Heart right ventricle (tissue), 16 donors: ENCODE measurements at regions of chr9 and their contacts with region 1.

Region 1: GRCh38 chr9:83219152-83219923 is 156.4 kb upstream of the RASEF start:
- DNase-seq: peak; percentile 81 to 87
- ATAC-seq: peak; percentile 95 to 98 (median 97)
- H3K4me3 ChIP-seq: peak overlapping the region; percentile 31 to 77 (median 63)
- H3K27ac ChIP-seq: peak overlapping the region; percentile 20 to 84 (median 74)
- H3K4me1 ChIP-seq: peaks cover 0 to 29% (median 23%) of the 10 kb centered on the region in 9 donors
- H3K27me3 ChIP-seq: no peaks in the 10 kb centered on the region
- CTCF ChIP-seq: peak; percentile 47 to 84 (median 71)

Region 2: GRCh38 chr9:83266666-83267496 is 47.5 kb after region 1 on chr9:
- intact Hi-C with region 1: no loop called
- DNase-seq: peak; percentile 43 to 67
- ATAC-seq: peak; percentile 82 to 97 (median 92)
- H3K4me3 ChIP-seq: peak overlapping the region; percentile 9 to 49 (median 36)
- H3K27ac ChIP-seq: peak overlapping the region; percentile 14 to 89 (median 82)
- H3K4me1 ChIP-seq: peaks cover 0 to 72% (median 31%) of the 10 kb centered on the region in 9 donors
- H3K27me3 ChIP-seq: no peaks in the 10 kb centered on the region
- CTCF ChIP-seq: no peak

Region 3: GRCh38 chr9:83327323-83327722 is 108.0 kb after region 1 on chr9:
- intact Hi-C with region 1: loop called in 6 of 10 experiments (anchors 5 to 10 kb)
- DNase-seq: peak in 1 of 2 donors; percentile 20
- ATAC-seq: peak in 7 of 8 donors; percentile 17 to 72 (median 56)
- H3K4me3 ChIP-seq: no peak overlapping the region
- H3K27ac ChIP-seq: no peak overlapping the region
- H3K4me1 ChIP-seq: peaks cover 0 to 15% (median 0%) of the 10 kb centered on the region in 9 donors
- H3K27me3 ChIP-seq: no peaks in the 10 kb centered on the region
- CTCF ChIP-seq: no peak

Region 4: GRCh38 chr9:83538172-83538889 is 319.0 kb after region 1 on chr9 and contains the start of gene FRMD3:
- intact Hi-C with region 1: loop called in 9 of 10 experiments (anchors 2 to 10 kb)
- DNase-seq: peak; percentile 88 to 91
- ATAC-seq: peak; percentile 91 to 99 (median 96)
- H3K4me3 ChIP-seq: peak within 1 kb of the TSS; percentile 62 to 87 (median 72)
- H3K27ac ChIP-seq: peak within 1 kb of the TSS; percentile 78 to 89 (median 84)
- H3K4me1 ChIP-seq: peaks cover 3 to 24% (median 21%) of the 10 kb centered on the region in 9 donors
- H3K27me3 ChIP-seq: peaks cover 0 to 17% (median 0%) of the 10 kb centered on the region in 7 donors
- CTCF ChIP-seq: peak; percentile 70 to 97 (median 84)
- total RNA-seq, gene FRMD3: 60.5 to 145 (median 113) TPM

Region 5: GRCh38 chr9:83583151-83584014 is 364.0 kb after region 1 on chr9:
- intact Hi-C with region 1: loop called in 1 of 10 experiments (anchors 10 kb)
- DNase-seq: peak in 1 of 2 donors; percentile 67
- ATAC-seq: peak in 5 of 8 donors; percentile 61 to 81 (median 75)
- H3K4me3 ChIP-seq: no peak overlapping the region
- H3K27ac ChIP-seq: no peak overlapping the region
- H3K4me1 ChIP-seq: no peaks in the 10 kb centered on the region
- H3K27me3 ChIP-seq: no peaks in the 10 kb centered on the region
- CTCF ChIP-seq: peak; percentile 43 to 79 (median 75)

Region 6: GRCh38 chr9:83707768-83708514 is 488.6 kb after region 1 on chr9 and contains the start of gene UBQLN1:
- intact Hi-C with region 1: loop called in 1 of 10 experiments (anchors 5 kb)
- DNase-seq: peak; percentile 93 to 96
- ATAC-seq: peak; percentile 96 to 98 (median 97)
- H3K4me3 ChIP-seq: peak within 1 kb of the TSS; percentile 73 to 99 (median 95)
- H3K27ac ChIP-seq: peak within 1 kb of the TSS; percentile 94 to 99 (median 96)
- H3K4me1 ChIP-seq: peaks cover 0 to 46% (median 34%) of the 10 kb centered on the region in 9 donors
- H3K27me3 ChIP-seq: no peaks in the 10 kb centered on the region
- CTCF ChIP-seq: no peak
- total RNA-seq, gene UBQLN1: 86.1 to 123 (median 99.2) TPM